BJ (cell line): ENCODE measurements at regions of chr22 and their contacts with region 1.

Region 1: GRCh38 chr22:37643225-37643847 is 3.9 kb downstream of the SH3BP1 start:
- DNase-seq: no peak
- H3K4me3 ChIP-seq: no peak overlapping the region
- H3K27me3 ChIP-seq: no peaks in the 10 kb centered on the region
- CTCF ChIP-seq: peak; percentile 91

Region 2: DNA sequence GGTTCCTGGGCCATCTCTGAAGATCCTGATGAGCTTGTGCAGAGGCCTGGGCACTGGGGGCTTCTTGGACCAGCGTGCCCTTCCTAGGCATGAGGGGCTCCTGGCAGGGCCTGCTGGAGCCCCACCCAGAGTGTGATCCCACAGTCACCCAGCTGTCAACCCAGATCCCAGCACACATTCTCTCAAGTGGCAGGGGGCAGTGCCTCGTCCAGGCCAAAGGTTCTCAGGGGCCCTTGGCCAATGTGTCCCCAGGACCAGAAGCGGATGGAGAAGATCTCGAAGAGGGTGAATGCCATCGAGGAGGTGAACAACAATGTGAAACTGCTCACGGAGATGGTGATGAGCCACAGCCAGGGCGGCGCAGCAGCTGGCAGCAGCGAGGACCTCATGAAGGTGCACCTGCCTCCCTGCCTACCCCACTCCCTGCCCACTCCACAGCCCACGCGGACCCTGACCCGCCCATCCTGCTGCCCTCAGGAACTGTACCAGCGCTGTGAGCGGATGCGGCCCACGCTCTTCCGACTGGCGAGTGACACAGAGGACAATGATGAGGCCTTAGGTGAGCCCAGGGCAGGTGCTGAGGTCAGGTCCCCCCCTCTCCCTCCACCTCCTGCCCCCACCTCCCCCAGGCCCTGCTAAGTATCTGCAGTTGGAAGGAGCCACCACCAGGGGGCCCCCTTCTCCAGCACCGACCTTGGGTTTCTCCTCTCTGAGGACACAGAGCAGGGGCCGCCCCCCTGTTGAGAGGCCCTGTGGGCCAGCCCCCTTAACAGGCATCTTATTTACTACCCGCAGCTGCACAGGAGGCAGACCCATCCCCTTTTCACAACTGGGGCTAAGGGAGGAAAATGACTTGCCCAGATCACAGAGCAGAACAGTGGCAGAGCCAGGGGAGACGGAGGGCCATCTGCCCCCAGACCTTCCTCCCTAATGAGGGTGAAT is 20.0 kb before region 1 on chr22:
- CTCF ChIA-PET with region 1: interaction called, 47 read pairs
- POLR2A ChIA-PET with region 1: no interaction called
- DNase-seq: no peak
- H3K4me3 ChIP-seq: no peak overlapping the region
- H3K27me3 ChIP-seq: no peaks in the 10 kb centered on the region
- CTCF ChIP-seq: peak; percentile 93

Region 3: GRCh38 chr22:37686002-37686982 is 43.0 kb after region 1 on chr22 and contains the start of gene NOL12:
- CTCF ChIA-PET with region 1: interaction called, 265 read pairs
- POLR2A ChIA-PET with region 1: interaction called, 5 read pairs
- DNase-seq: no peak
- H3K4me3 ChIP-seq: peak within 1 kb of the TSS; percentile 76
- H3K27me3 ChIP-seq: no peaks in the 10 kb centered on the region
- CTCF ChIP-seq: no peak
- polyA plus RNA-seq, gene NOL12: 11.0 and 16.5 TPM in 2 replicates

Region 4: GRCh38 chr22:37781479-37781911 is 138.2 kb after region 1 on chr22:
- CTCF ChIA-PET with region 1: interaction called, 11 read pairs
- POLR2A ChIA-PET with region 1: no interaction called
- DNase-seq: no peak
- H3K4me3 ChIP-seq: no peak overlapping the region
- H3K27me3 ChIP-seq: no peaks in the 10 kb centered on the region; the same call in 1 of the 2 replicates
- CTCF ChIP-seq: peak; percentile 31; the same call in 1 of the 2 replicates

Region 5: GRCh38 chr22:37862570-37863325 is 219.4 kb after region 1 on chr22:
- CTCF ChIA-PET with region 1: interaction called, 12 read pairs
- POLR2A ChIA-PET with region 1: no interaction called
- DNase-seq: no peak
- H3K4me3 ChIP-seq: no peak overlapping the region
- H3K27me3 ChIP-seq: no peaks in the 10 kb centered on the region
- CTCF ChIP-seq: no peak